Activated naive CD8-positive, alpha-beta T cell treated with anti-CD3 and anti-CD28 coated beads, Interleukin-2, amount 10 ng/mL, durations not matched to agents 7 days and 5 days (primary cell): ENCODE measurements at regions of chr1 and their contacts with region 1.

Region 1: GRCh38 chr1:2194898-2195673 is 514 bp upstream of the FAAP20 start:
- DNase-seq: peak; percentile 94
- ATAC-seq: peak; percentile 75
- H3K4me3 Mint-ChIP-seq: peak overlapping the region; percentile 84
- H3K27ac Mint-ChIP-seq: peak overlapping the region; percentile 92
- H3K4me1 Mint-ChIP-seq: peaks cover 18% of the 10 kb centered on the region
- H3K27me3 Mint-ChIP-seq: no peaks in the 10 kb centered on the region

Region 2: DNA sequence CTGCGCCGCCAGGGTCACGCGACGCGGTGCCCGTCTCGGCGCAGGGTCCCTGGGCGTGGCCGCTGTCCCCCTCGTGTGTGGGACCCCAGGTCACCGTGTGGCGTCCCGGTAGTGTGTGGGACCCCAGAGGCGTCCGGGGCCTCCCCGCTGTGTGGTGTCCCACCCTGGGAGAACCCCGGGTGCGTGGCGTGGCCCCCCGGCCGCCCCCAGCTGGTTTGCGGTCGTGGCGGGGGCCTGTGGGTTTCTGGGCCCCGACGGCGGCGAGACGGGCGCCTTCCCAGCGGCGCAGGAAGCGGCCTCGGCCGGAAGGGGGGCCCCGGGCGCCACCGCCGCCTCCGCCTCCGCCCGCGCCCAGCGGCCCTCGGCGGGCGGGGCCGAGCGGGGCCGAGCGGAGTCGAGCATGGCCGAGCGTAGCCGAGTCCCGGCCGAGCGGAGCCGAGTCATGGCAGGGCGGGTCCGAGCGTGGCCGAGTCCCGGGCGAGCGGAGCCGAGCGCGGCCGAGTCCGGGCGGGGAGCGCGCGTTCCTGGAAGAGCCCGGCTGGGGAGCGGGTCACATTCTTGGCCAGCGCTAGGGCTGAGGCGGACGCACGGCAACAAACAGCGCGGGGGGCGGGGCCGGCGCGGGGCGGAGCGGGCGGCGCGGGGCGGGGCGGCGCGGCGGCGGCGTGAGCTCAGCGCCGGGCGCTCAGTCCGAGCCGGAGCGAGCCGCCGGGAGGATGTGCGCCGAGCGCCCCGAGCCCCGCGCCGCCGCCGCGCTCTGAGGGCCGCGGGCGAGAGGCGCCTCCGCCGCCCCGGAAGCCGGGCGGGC is 32.5 kb after region 1 on chr1:
- POLR2A ChIA-PET with region 1: interaction called, 15 read pairs
- DNase-seq: peak; percentile 99
- ATAC-seq: peak; percentile 86
- H3K4me3 Mint-ChIP-seq: peak overlapping the region; percentile 66
- H3K27ac Mint-ChIP-seq: peak overlapping the region; percentile 65
- H3K4me1 Mint-ChIP-seq: peaks cover 15% of the 10 kb centered on the region
- H3K27me3 Mint-ChIP-seq: peaks cover 11% of the 10 kb centered on the region

Region 3: GRCh38 chr1:2314803-2315673 is 120.0 kb after region 1 on chr1:
- POLR2A ChIA-PET with region 1: interaction called, 11 read pairs
- DNase-seq: peak; percentile 82
- ATAC-seq: peak; percentile 46
- H3K4me3 Mint-ChIP-seq: peak overlapping the region; percentile 68
- H3K27ac Mint-ChIP-seq: peak overlapping the region; percentile 74
- H3K4me1 Mint-ChIP-seq: peaks cover 2% of the 10 kb centered on the region
- H3K27me3 Mint-ChIP-seq: no peaks in the 10 kb centered on the region

Region 4: GRCh38 chr1:2391041-2391930 is 196.2 kb after region 1 on chr1 and contains the starts of genes MORN1 and RER1:
- POLR2A ChIA-PET with region 1: interaction called, 25 read pairs
- DNase-seq: peak; percentile 99
- ATAC-seq: peak; percentile 99
- H3K4me3 Mint-ChIP-seq: peak within 1 kb of the TSS; percentile 91
- H3K27ac Mint-ChIP-seq: peak within 1 kb of the TSS; percentile 86
- H3K4me1 Mint-ChIP-seq: peaks cover 22% of the 10 kb centered on the region
- H3K27me3 Mint-ChIP-seq: no peaks in the 10 kb centered on the region
- total RNA-seq, gene MORN1: 10.5 to 11.6 TPM
- total RNA-seq, gene RER1: 140 to 147 TPM